ENCODE measurements at regions of chr13 and their contacts with region 1.

Region 1: GRCh38 chr13:49240017-49240416 is 7.7 kb upstream of the CDADC1 start:
- DNase-seq: no peak
- H3K4me3 ChIP-seq: no peak overlapping the region
- H3K27me3 ChIP-seq: peaks cover 4% of the 10 kb centered on the region
- CTCF ChIP-seq: peak; percentile 50

Region 2: DNA sequence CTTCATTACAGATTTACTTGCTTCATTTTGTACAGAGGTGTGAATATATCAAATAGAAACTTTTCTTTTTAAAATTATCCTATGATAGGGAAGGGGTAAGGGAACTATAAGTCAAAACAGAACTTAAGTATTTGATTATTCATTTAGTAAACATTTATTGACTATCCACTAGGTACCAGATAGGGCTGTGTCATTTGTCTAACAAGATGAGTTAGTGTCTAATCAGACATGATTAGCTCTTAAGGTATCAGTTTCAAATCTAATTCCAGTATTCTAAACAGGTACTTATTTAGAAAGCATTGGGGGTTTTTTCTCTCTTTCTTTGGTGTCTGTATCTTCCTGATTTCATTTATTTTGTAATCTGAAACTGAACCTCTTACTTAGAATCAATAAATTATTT is 39.9 kb after region 1 on chr13:
- CTCF ChIA-PET with region 1: interaction called, 10 read pairs
- POLR2A ChIA-PET with region 1: no interaction called
- DNase-seq: no peak
- H3K4me3 ChIP-seq: no peak overlapping the region
- H3K27me3 ChIP-seq: no peaks in the 10 kb centered on the region
- CTCF ChIP-seq: no peak

Measured in BJ (cell line).